ENCODE measurements at regions of chr14 and their contacts with region 1.

Region 1: DNA sequence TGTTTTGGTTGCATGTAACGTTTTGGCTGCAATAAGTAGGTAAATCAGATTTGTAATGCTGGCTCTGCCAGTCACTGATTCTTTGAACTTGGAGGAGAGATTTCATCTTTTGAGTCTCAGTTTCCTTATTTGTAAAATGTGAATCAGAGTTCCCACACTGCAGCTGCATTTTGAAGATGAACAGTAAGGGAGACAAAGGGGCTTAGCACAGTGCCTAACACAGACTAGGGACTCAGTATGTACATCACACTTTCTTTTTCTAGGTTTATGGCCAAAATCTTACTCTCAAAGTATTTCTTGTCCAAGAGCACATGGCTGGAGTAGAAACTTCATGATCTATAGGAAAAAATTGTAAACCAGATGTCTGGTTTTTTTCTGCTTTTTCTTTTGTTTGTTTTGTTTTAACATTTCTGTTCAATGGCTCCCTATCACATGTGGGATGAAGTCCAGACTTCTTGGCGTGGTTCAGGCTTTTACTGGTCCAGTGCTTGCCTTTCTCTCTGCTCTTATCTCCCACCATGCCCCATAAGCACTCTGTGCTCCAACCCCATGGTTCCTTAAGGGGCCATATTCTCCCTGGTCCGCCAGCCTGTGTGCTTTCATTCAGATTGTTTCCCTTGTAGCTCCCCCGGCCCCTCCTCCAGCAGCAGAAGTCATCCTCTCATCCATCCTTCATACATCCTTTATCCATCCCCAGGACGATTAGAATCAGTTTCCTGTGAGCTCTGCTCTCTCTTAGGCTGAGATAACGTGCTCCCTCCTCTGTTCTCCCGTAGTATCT is 58.0 kb downstream of the SYNE2 start:
- DNase-seq: no peak
- H3K4me3 Mint-ChIP-seq: no peak overlapping the region
- H3K27ac Mint-ChIP-seq: no peak overlapping the region
- H3K4me1 Mint-ChIP-seq: peaks cover 47% of the 10 kb centered on the region
- H3K27me3 Mint-ChIP-seq: no peaks in the 10 kb centered on the region

Region 2: DNA sequence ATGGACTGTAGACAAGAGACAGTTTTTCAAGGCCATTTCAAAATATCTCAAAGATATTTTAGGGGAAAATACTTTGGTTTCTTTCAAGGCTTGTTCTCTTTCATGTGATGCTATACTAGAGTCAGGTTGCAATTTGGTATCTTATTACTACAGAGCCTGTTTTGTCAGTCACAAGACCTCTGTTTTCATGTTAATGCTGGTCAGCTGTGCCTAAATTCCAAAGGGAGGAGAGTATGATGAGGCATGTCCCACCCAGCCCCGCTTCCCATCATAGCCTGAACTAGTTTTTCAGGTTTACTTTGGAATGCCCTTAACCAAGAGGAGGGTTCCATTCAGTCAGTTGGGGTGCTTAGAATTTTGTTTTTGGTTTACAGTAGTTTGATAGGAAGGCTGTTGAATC is 644.7 kb before region 1 on chr14:
- intact Hi-C with region 1: no loop called
- DNase-seq: no peak
- H3K4me3 Mint-ChIP-seq: no peak overlapping the region
- H3K27ac Mint-ChIP-seq: no peak overlapping the region
- H3K4me1 Mint-ChIP-seq: no peaks in the 10 kb centered on the region
- H3K27me3 Mint-ChIP-seq: peaks cover 21% of the 10 kb centered on the region

Region 3: DNA sequence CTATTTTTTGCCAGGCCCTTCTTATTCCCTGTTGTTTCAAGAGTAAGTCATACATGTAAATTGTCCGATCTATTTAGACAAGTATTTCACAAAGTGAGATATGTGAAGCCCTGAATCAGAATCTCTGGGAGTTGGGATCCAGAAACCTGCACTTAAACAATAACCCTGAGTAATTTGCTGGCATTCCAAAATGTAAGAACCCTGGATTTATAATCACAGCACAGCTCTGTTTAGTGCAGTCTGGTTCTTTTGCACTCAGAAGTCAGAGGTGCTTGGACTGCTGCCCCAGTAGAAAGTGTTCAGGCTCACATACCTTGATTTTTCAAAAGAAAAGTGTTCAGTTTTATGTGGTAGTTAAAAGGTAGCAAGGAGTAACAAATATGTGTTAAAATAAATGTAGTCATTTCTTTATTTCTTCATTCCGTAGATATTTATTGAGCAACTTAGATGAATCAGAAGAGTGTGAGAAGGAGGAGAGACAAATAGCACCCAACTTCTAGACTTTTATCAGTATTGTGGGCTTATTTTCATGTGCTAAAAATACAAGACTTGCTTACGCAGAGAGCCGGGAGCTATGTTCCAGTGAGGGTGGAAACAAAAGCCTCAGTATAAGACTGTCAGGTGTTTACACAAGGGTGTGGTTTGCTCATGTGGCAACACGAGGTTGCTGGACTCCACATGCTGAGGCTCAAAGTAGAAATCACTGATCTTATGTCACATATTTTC is 12.1 kb after region 1 on chr14:
- intact Hi-C with region 1: no loop called
- DNase-seq: no peak
- H3K4me3 Mint-ChIP-seq: no peak overlapping the region
- H3K27ac Mint-ChIP-seq: no peak overlapping the region
- H3K4me1 Mint-ChIP-seq: peaks cover 16% of the 10 kb centered on the region
- H3K27me3 Mint-ChIP-seq: no peaks in the 10 kb centered on the region

Region 4: GRCh38 chr14:63933110-63933509 is 22.3 kb after region 1 on chr14:
- intact Hi-C with region 1: loop called (anchors 2 kb)
- DNase-seq: no peak
- H3K4me3 Mint-ChIP-seq: peak overlapping the region; percentile 31
- H3K27ac Mint-ChIP-seq: peak overlapping the region; percentile 24
- H3K4me1 Mint-ChIP-seq: peaks cover 30% of the 10 kb centered on the region
- H3K27me3 Mint-ChIP-seq: no peaks in the 10 kb centered on the region